Posterior vena cava (tissue), 2 donors: ENCODE measurements at regions of chr9 and their contacts with region 1.

Region 1: DNA sequence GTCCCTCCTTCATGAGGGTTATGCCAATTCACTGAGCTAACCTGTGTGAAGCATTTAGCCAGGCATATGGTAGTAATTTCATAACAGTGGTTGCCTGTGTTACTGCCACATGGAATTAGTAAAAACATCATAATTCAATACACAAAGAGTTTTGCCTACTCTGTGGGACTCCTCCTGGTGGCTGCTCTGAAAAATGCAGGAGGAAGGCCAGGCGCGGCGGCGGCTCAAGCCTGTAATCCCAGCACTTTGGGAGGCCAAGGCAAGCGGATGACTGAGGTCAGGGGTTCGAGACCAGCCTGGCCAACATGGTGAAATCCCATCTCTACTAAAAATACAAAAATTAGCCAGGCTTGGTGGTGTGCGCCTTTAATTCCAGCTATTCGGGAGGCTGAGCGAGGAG is 547.3 kb downstream of the CDK5RAP2 start:
- DNase-seq: no peak

Region 2: GRCh38 chr9:120001536-120001935 is 31.1 kb before region 1 on chr9:
- intact Hi-C with region 1: loop called in 1 of 2 experiments (anchors 1 kb)
- DNase-seq: no peak

Region 3: GRCh38 chr9:120161736-120162135 is 129.1 kb after region 1 on chr9:
- intact Hi-C with region 1: no loop called
- DNase-seq: no peak

Region 4: DNA sequence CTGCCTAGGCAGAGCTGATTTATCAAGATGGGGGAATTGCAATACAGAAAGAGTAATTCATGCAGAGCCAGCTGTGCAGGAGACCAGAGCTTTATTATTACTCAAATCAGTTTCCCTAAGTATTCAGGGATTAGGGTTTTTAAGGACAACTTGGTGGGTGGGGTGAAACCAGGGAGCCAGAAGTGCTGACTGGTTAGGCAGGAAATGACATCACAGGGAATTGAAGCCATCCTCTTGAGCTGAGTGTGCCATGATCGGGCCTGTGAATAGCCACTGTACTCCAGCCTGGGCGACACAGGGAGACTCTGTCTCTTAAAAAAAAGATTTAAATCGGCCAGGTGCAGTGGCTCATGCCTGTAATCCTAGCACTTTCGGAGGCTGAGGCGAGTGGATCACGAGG is 592.6 kb after region 1 on chr9:
- intact Hi-C with region 1: no loop called
- DNase-seq: no peak